Activated CD4-positive, alpha-beta T cell treated with anti-CD3 and anti-CD28 coated beads for 36 hours (primary cell): ENCODE measurements at regions of chr3 and their contacts with region 1.

Region 1: GRCh38 chr3:58305882-58306711 is at the starts of genes HTD2 and RPP14:
- DNase-seq: peak; percentile 99
- ATAC-seq: peak; percentile 90
- H3K4me3 Mint-ChIP-seq: peak within 1 kb of the TSS; percentile 97
- H3K27ac Mint-ChIP-seq: peak within 1 kb of the TSS; percentile 97
- H3K4me1 Mint-ChIP-seq: peaks cover 30% of the 10 kb centered on the region
- H3K27me3 Mint-ChIP-seq: peaks cover 2% of the 10 kb centered on the region
- total RNA-seq, gene HTD2: 2.3 to 7.9 TPM
- total RNA-seq, gene RPP14: 16.4 to 16.9 TPM

Region 2: GRCh38 chr3:57692259-57693147 is 613.6 kb before region 1 on chr3 and contains the start of gene DENND6A:
- CTCF ChIA-PET with region 1: no interaction called
- POLR2A ChIA-PET with region 1: no interaction called
- intact Hi-C with region 1: loop called in 1 of 2 experiments (anchors 1 kb)
- DNase-seq: peak; percentile 98
- ATAC-seq: peak; percentile 88
- H3K4me3 Mint-ChIP-seq: peak within 1 kb of the TSS; percentile 87
- H3K27ac Mint-ChIP-seq: peak within 1 kb of the TSS; percentile 85
- H3K4me1 Mint-ChIP-seq: peaks cover 31% of the 10 kb centered on the region
- H3K27me3 Mint-ChIP-seq: no peaks in the 10 kb centered on the region
- total RNA-seq, gene DENND6A: 15.0 to 17.1 TPM

Region 3: GRCh38 chr3:58217209-58217811 is 88.8 kb before region 1 on chr3:
- CTCF ChIA-PET with region 1: interaction called, 10 read pairs
- POLR2A ChIA-PET with region 1: interaction called, 5 read pairs
- intact Hi-C with region 1: loop called in 1 of 2 experiments (anchors 1 kb)
- DNase-seq: peak; percentile 76
- ATAC-seq: peak; percentile 34
- H3K4me3 Mint-ChIP-seq: peak overlapping the region; percentile 9
- H3K27ac Mint-ChIP-seq: no peak overlapping the region
- H3K4me1 Mint-ChIP-seq: peaks cover 36% of the 10 kb centered on the region
- H3K27me3 Mint-ChIP-seq: peaks cover 4% of the 10 kb centered on the region

Region 4: GRCh38 chr3:58324391-58325390 is 18.6 kb after region 1 on chr3:
- CTCF ChIA-PET with region 1: interaction called, 72 read pairs
- POLR2A ChIA-PET with region 1: interaction called, 5 read pairs
- intact Hi-C with region 1: loop called (anchors 1 kb)
- DNase-seq: no peak
- ATAC-seq: peak; percentile 62
- H3K4me3 Mint-ChIP-seq: peak overlapping the region; percentile 29
- H3K27ac Mint-ChIP-seq: peak overlapping the region; percentile 86
- H3K4me1 Mint-ChIP-seq: peaks cover 40% of the 10 kb centered on the region
- H3K27me3 Mint-ChIP-seq: no peaks in the 10 kb centered on the region

Region 5: DNA sequence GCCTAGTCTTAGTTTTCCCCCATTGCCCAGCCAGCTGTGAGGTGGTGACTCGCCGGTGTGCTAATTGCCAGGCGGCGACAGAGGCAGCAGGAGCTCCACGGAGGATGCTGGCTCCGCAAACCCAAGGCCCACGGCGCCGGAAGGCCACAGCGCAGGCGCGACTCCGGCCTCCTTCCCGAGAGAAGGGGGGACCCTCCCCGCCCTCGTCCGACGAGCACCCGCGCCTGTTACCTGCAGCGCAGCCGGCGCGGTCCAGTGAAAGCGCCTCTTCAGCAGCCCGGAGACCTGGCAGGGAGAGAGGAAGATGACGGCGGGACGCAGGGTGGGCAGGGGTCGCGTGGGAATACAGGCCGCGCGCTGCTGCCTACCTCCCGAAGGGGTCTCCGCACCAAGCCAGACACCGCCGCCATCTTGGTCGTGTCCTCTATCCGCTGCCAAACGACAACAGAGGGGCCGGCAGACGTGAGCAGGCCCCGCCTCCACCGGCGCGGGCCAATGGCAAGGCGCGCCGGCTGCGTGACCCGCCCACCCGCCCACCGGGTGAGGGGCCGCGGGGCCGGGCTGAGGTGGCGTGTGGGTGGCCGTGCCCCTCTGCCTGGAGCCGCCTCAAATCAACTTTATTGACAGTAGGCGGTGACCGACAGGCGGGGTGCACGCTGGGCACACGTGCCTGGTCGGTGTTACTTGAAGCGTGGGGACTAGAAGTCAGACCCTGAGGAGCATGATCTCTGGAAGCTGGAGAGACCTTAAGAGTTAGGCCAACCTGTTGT is 127.5 kb after region 1 on chr3 and contains the start of gene PDHB:
- CTCF ChIA-PET with region 1: interaction called, 4 read pairs
- POLR2A ChIA-PET with region 1: no interaction called
- intact Hi-C with region 1: loop called (anchors 1 kb)
- DNase-seq: peak; percentile 93
- ATAC-seq: peak; percentile 96
- H3K4me3 Mint-ChIP-seq: peak within 1 kb of the TSS; percentile 85
- H3K27ac Mint-ChIP-seq: peak within 1 kb of the TSS; percentile 96
- H3K4me1 Mint-ChIP-seq: peaks cover 24% of the 10 kb centered on the region
- H3K27me3 Mint-ChIP-seq: no peaks in the 10 kb centered on the region
- total RNA-seq, gene PDHB: 42.7 to 50.7 TPM

Region 6: DNA sequence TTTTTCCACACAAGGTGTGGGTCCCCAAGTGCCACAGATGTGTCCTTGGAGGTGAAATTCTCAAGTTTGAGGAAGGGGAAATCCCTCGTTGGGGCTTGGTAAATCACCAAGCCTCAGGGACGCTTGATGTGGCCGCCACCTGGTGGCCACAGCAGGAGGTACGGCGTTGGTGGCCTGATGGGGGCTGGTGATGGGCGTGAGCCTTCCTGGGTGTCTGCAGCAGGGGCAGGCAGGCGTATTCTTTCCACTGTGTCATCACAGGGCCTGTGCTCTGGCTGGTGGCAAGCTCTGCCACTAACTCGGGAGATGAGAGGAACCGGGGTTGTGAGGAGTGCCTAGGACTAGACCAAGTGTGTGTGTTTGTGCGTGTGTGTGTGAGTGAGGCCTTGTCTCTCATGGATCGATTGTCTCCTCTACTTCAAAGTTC is 226.7 kb after region 1 on chr3:
- CTCF ChIA-PET with region 1: interaction called, 6 read pairs
- POLR2A ChIA-PET with region 1: interaction called, 4 read pairs
- intact Hi-C with region 1: loop called (anchors 1 kb)
- DNase-seq: peak; percentile 92
- ATAC-seq: peak; percentile 97
- H3K4me3 Mint-ChIP-seq: no peak overlapping the region
- H3K27ac Mint-ChIP-seq: peak overlapping the region; percentile 67
- H3K4me1 Mint-ChIP-seq: peaks cover 13% of the 10 kb centered on the region
- H3K27me3 Mint-ChIP-seq: no peaks in the 10 kb centered on the region